Heart right ventricle (tissue), 16 donors: ENCODE measurements at regions of chr12 and their contacts with region 1.

Region 1: GRCh38 chr12:89162704-89163261 is 189.5 kb downstream of the DUSP6 start:
- DNase-seq: peak in 1 of 2 donors; percentile 65
- ATAC-seq: peak; percentile 77 to 91 (median 79)
- H3K4me3 ChIP-seq: no peak overlapping the region
- H3K27ac ChIP-seq: peak overlapping the region; percentile 31 to 93 (median 68)
- H3K4me1 ChIP-seq: peaks cover 0 to 88% (median 42%) of the 10 kb centered on the region in 9 donors
- H3K27me3 ChIP-seq: no peaks in the 10 kb centered on the region
- CTCF ChIP-seq: no peak

Region 2: GRCh38 chr12:89051065-89051677 is 111.6 kb before region 1 on chr12:
- intact Hi-C with region 1: loop called in 3 of 10 experiments (anchors 10 kb)
- DNase-seq: peak in 1 of 2 donors; percentile 44
- ATAC-seq: peak in 6 of 8 donors; percentile 70 to 85 (median 79)
- H3K4me3 ChIP-seq: no peak overlapping the region
- H3K27ac ChIP-seq: no peak overlapping the region
- H3K4me1 ChIP-seq: peaks cover 0 to 7% (median 0%) of the 10 kb centered on the region in 9 donors
- H3K27me3 ChIP-seq: no peaks in the 10 kb centered on the region
- CTCF ChIP-seq: peak; percentile 83 to 97 (median 93)

Region 3: DNA sequence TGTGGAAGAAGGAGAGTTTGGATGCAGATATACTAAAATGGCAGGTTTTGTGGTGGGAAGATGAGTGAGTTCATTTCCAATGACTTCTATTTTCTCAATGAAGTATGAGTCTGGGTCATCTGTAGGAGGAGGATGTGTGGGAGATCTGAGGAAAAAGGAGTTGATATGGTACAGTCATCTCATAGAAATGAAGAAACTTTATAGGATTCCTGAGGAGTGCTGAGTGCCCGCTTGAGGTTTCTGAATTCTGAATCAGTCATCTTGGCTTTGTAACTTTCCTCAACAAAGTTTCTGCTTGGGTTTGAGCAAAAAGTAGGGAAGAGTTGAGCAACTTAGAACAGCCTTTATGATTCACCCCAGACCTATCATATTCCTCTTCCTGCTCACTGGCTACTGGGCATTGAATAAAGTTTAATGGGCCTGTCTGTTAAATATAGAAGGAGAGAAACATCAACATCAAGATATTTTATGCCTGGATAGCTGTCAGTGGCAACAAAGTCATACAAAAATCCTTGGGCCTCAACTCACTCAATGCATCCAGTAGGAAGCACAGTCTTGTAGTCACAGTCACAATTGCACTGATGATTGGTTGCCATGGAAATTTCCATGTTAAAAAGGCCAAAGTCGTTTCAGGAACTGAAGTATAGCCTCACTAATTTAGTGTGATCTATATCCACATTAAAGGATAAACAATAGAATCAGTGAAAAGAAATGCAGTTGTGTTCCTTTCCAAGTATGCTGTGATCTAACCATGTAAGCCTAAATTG is 95.2 kb before region 1 on chr12:
- intact Hi-C with region 1: loop called in 1 of 10 experiments (anchors 10 kb)
- DNase-seq: no peak
- ATAC-seq: no peak
- H3K4me3 ChIP-seq: no peak overlapping the region
- H3K27ac ChIP-seq: no peak overlapping the region
- H3K4me1 ChIP-seq: peaks cover 0 to 3% (median 0%) of the 10 kb centered on the region in 9 donors
- H3K27me3 ChIP-seq: no peaks in the 10 kb centered on the region
- CTCF ChIP-seq: no peak

Region 4: DNA sequence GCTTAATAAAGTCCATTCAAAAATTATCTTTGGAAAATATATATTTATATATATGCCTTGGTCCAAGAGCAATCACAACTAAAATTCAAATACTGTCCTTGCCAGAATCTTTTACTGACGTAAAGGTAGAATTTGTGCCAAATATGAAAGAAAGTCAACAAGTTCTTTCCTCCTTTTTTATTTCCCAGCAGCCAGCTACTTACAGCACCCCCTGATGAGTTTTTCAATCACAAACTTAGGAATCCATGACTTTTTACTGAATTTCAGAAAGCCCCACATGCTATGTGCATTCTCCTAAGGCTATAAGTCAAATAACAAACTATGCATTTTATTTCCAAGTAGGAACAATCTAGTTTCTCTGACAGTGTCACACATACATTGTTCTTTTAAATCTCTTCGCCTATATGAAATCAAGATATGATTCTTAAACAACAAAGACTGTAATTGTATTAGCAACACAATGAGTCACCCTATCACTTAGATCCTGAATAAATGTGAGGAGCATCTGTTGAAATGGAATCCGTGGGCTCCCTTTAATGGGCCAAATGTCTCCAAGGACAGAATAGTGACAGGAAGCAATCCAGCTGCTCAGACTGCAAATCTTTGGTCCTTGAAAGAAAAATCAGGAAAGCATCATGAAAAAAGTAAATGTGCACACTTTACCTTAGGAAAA is 81.9 kb before region 1 on chr12:
- intact Hi-C with region 1: loop called in 1 of 10 experiments (anchors 5 kb)
- DNase-seq: no peak
- ATAC-seq: peak in 4 of 8 donors; percentile 40 to 70 (median 61)
- H3K4me3 ChIP-seq: no peak overlapping the region
- H3K27ac ChIP-seq: peak overlapping the region in 3 of 10 donors; percentile 7 to 49 (median 37)
- H3K4me1 ChIP-seq: peaks cover 0 to 47% (median 35%) of the 10 kb centered on the region in 9 donors
- H3K27me3 ChIP-seq: no peaks in the 10 kb centered on the region
- CTCF ChIP-seq: no peak

Region 5: GRCh38 chr12:89451841-89452251 is 289.1 kb after region 1 on chr12:
- intact Hi-C with region 1: loop called in 2 of 10 experiments (anchors 10 kb)
- DNase-seq: peak; percentile 35 to 38
- ATAC-seq: peak; percentile 53 to 78 (median 72)
- H3K4me3 ChIP-seq: peak overlapping the region in 2 of 10 donors; percentile 0 to 7
- H3K27ac ChIP-seq: peak overlapping the region in 9 of 10 donors; percentile 24 to 85 (median 71)
- H3K4me1 ChIP-seq: peaks cover 0 to 43% (median 41%) of the 10 kb centered on the region in 9 donors
- H3K27me3 ChIP-seq: no peaks in the 10 kb centered on the region
- CTCF ChIP-seq: no peak